AG04450 (cell line): ENCODE measurements at regions of chr6 and their contacts with region 1.

Region 1: DNA sequence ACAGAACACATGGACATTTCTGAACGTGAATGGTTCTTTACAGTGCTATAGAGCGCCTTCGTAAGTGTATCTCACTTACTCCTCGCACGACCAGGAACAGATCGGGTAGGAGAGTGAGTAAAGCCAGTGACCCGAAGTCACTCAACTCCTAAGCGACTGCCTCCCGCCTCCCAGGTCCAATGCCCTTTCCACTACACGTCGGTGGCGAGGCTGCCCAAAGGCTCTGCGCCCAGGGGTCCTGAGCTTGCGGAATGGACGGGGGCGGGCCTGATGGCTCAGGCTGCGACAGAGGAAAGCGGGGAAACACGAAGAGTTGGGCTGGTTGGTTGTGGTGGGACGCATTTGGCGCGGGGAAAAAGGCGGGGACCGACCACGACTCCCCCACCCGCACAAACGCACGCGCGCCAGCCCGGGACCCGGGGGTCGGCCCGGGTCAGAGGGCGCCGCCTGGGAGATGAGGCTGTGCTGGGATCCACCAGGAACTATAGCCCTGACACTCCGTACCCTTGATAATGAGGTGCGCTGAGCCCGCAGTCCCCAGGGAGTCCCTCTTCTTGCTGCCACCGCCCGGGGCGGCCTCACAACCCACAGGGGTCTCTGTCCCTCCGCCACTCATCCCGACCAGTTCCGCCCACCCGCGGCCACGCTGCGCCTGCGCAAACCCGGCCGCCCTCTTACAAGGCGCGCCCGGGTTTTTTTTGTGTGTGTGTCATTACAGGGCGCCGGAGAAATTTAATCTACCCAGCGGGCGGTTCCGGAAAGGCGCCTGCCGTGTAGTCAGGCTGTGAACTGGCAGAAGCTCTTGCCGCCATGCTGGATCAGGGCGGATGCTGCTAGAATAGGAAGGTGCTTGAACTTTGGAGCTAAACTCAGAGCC is at the start of gene BLOC1S5:
- DNase-seq: peak; percentile 91
- H3K4me3 ChIP-seq: peak within 1 kb of the TSS; percentile 90
- H3K27ac ChIP-seq: peak within 1 kb of the TSS; percentile 63
- H3K27me3 ChIP-seq: no peaks in the 10 kb centered on the region
- CTCF ChIP-seq: peak; percentile 12; the same call in 1 of the 2 replicates
- polyA plus RNA-seq, gene BLOC1S5: 8.4 and 15.1 TPM in 2 replicates

Region 2: DNA sequence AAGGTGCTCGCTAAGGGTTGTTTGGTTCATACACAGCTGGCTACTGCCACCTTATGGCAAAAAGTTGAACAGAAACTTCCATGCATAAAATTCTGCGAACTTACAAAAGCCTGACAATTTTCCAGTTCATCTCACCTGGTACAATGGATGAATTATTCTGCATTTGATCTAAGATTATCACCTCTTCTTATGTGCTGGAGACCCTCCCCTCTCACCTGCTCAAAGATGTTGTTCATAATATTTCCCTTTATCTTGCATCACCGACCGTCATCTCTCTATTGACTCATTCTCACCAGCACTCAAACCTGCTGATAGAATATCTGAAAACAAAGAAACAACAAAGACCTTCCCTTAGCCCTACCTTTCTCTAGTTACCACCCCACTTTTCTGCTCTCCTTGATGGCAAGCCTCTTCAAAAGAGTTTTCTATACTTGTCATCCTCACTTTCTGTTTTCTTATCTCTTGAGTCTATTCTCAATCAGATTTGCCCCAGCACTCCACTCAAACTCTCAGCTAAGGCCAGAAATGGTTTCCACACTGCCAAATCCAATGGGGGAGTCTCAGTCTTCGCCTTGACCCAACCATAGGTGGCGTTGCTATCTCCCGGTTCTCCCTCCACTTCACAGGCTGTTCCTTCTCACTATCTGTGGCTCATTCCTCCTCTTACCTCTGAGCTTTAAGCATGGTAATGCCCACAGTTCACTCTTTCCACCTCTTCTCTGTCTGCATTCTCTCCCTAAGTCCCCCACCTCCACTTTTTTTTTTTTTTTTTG is 448.2 kb before region 1 on chr6:
- CTCF ChIA-PET with region 1: interaction called, 23 read pairs
- POLR2A ChIA-PET with region 1: no interaction called
- DNase-seq: no peak
- H3K4me3 ChIP-seq: no peak overlapping the region
- H3K27ac ChIP-seq: no peak overlapping the region
- H3K27me3 ChIP-seq: no peaks in the 10 kb centered on the region
- CTCF ChIP-seq: peak; percentile 79

Region 3: GRCh38 chr6:7719364-7719850 is 344.6 kb before region 1 on chr6:
- CTCF ChIA-PET with region 1: interaction called, 116 read pairs
- POLR2A ChIA-PET with region 1: no interaction called
- DNase-seq: no peak
- H3K4me3 ChIP-seq: no peak overlapping the region
- H3K27ac ChIP-seq: no peak overlapping the region
- H3K27me3 ChIP-seq: peaks cover 3% of the 10 kb centered on the region
- CTCF ChIP-seq: no peak

Region 4: GRCh38 chr6:7910654-7911344 is 153.2 kb before region 1 on chr6 and contains the start of gene TXNDC5:
- CTCF ChIA-PET with region 1: interaction called, 22 read pairs
- POLR2A ChIA-PET with region 1: no interaction called
- DNase-seq: no peak
- H3K4me3 ChIP-seq: peak within 1 kb of the TSS; percentile 83
- H3K27ac ChIP-seq: peak within 1 kb of the TSS; percentile 39
- H3K27me3 ChIP-seq: peaks cover 3% of the 10 kb centered on the region
- CTCF ChIP-seq: no peak
- polyA plus RNA-seq, gene TXNDC5: 285 and 310 TPM in 2 replicates

Region 5: GRCh38 chr6:7992002-7992815 is 71.8 kb before region 1 on chr6:
- CTCF ChIA-PET with region 1: interaction called, 12 read pairs
- POLR2A ChIA-PET with region 1: no interaction called
- DNase-seq: peak; percentile 49
- H3K4me3 ChIP-seq: peak overlapping the region; percentile 42
- H3K27ac ChIP-seq: peak overlapping the region; percentile 48
- H3K27me3 ChIP-seq: no peaks in the 10 kb centered on the region
- CTCF ChIP-seq: peak; percentile 63